Tibial artery (tissue), 4 donors: ENCODE measurements at regions of chr18 and their contacts with region 1.

Region 1: DNA sequence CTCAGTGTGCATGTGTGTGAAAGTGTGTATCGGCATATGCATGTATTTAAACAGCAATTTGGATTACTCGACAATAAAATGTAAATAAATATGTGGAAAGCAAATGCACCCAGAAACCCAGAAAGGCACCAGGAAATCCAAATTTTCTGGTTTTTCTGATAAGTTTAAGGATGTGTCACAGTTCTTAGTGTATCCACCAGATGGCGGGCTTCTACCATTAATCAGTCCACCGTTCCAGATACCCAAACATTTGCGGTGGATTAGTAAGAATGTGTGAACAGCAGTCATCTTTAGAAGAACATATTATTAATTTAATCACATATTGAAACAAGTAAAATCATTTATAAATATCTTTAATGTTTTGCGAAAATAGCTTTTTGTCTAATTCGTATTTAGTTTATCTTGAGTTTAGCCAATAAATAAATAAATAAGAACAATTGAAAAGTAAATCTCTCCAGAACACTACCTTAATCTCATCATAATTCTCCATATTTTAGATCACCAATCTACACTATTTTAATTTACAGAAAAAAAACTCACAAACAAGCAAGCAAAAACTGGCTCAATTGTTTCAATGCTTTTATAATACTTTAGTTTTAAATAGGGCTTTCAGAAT is 298.9 kb downstream of the DSEL start:
- DNase-seq: peak in 1 of 2 donors; percentile 46
- H3K4me3 ChIP-seq: no peak overlapping the region
- H3K27ac ChIP-seq: no peak overlapping the region
- H3K4me1 ChIP-seq: peaks cover 0 to 4% (median 0%) of the 10 kb centered on the region in 4 donors
- H3K27me3 ChIP-seq: no peaks in the 10 kb centered on the region
- CTCF ChIP-seq: peak; percentile 78 to 87

Region 2: DNA sequence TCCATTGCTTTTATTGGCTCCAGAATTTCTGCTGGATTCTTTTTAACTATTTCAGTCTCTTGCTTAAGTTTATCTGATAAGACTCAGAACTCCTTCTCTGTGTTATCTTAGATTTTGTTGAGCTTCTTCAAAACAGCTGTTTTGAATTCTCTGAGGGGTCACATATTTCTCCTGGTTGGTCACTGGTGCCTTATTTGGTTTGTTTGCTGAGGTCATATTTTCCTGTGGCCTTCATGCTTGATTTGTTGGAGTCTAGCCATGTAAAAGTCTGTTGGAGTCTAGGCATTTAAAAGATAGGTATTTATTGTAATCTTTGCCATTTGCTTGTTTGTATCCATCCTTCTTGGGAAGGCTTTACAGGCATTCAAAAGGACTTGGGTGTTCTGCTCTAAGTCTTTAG is 99.9 kb before region 1 on chr18:
- intact Hi-C with region 1: no loop called
- DNase-seq: no peak
- H3K4me3 ChIP-seq: no peak overlapping the region
- H3K27ac ChIP-seq: no peak overlapping the region
- H3K4me1 ChIP-seq: no peaks in the 10 kb centered on the region
- H3K27me3 ChIP-seq: no peaks in the 10 kb centered on the region
- CTCF ChIP-seq: no peak

Region 3: GRCh38 chr18:67515945-67516538 is 298.4 kb after region 1 on chr18:
- intact Hi-C with region 1: loop called (anchors 10 kb)
- DNase-seq: peak; percentile 88 to 93
- H3K4me3 ChIP-seq: peak overlapping the region; percentile 83 to 97
- H3K27ac ChIP-seq: peak overlapping the region; percentile 92 to 96
- H3K4me1 ChIP-seq: peaks cover 0 to 56% (median 18%) of the 10 kb centered on the region in 4 donors
- H3K27me3 ChIP-seq: no peaks in the 10 kb centered on the region
- CTCF ChIP-seq: peak; percentile 63 to 80

Region 4: GRCh38 chr18:68623342-68623741 is 1405.7 kb after region 1 on chr18:
- intact Hi-C with region 1: loop called (anchors 5 kb)
- DNase-seq: peak; percentile 22 to 64
- H3K4me3 ChIP-seq: no peak overlapping the region
- H3K27ac ChIP-seq: no peak overlapping the region
- H3K4me1 ChIP-seq: no peaks in the 10 kb centered on the region
- H3K27me3 ChIP-seq: no peaks in the 10 kb centered on the region
- CTCF ChIP-seq: peak; percentile 73

Region 5: GRCh38 chr18:68660354-68661183 is 1442.9 kb after region 1 on chr18:
- intact Hi-C with region 1: loop called (anchors 2 kb)
- DNase-seq: no peak
- H3K4me3 ChIP-seq: no peak overlapping the region
- H3K27ac ChIP-seq: no peak overlapping the region
- H3K4me1 ChIP-seq: no peaks in the 10 kb centered on the region
- H3K27me3 ChIP-seq: no peaks in the 10 kb centered on the region
- CTCF ChIP-seq: peak; percentile 46